ENCODE measurements at regions of chr13 and their contacts with region 1.

Region 1: DNA sequence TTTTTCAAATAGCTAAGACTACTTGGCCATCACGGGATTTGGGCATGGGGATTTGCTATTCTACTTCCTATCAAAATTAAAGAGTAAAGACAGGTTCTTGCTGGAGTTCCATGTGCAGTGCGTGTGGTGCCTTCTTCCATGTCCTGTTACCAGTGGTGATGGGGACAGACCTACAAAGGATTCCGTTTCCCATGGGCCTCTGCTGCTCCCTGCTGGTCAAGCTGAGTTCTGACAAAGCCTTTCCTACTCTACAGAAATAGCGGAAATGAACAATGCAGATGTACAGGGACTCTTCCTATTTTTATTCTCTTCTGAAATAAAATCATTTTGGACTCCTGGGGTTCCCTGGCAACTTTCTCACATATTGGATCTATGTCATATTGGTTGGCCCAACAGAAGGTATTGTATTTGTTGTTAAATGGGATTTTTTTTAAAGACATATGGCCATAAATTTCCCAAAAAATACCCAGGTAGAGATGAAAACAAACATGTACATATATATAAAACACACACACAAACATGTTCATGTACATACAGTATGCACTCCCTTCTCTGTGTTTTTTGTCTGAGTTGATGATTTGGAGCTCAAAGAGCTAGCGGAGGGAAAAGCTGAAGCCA is 90.5 kb upstream of the SLC15A1 start:
- DNase-seq: peak; percentile 64
- ATAC-seq: peak; percentile 83

Region 2: DNA sequence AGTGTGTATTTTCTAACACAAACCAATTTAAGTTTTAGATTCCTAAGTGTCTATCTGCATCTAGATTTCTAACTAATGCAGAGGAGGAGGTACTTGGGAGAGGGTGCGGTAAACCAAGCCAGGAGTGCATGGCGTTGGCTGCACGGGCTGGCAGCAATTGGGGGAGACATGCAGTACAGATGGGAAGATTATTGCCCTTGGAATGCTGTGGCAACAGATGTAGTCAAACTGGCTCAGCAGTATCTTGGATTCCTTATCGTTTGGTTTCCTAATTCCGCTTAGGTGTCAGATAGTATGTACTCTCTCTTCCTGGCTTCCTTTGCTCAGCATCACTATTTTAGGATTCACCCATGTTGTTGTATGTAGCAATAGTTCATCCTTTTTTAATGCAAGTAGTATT is 236.7 kb before region 1 on chr13:
- intact Hi-C with region 1: no loop called
- DNase-seq: no peak
- ATAC-seq: peak; percentile 32

Region 3: DNA sequence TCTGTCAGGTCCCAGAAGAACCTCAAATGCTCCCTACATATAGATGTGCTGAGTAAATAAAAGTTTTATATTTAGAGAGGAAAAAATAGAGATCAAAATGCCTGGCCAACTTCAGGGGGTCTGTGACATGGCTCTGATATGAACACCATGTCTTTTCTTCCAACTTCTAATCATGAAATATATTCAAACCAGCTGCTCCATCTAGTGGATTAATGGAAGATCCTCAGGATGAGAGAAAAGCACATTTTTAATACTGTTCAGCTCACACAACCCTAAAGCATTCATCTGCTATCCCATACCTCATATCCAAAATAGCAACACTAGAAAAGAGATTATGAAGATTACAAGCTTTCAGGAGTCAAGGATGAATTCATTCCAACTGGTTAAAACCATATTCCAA is 190.8 kb after region 1 on chr13:
- intact Hi-C with region 1: loop called (anchors 5 kb)
- DNase-seq: no peak
- ATAC-seq: peak; percentile 77

Region 4: GRCh38 chr13:99288089-99288488 is 445.1 kb after region 1 on chr13:
- intact Hi-C with region 1: no loop called
- DNase-seq: no peak
- ATAC-seq: peak; percentile 39